GM12878 (cell line): ENCODE measurements at regions of chr2 and their contacts with region 1.

Region 1: GRCh38 chr2:149573760-149574159 is 13.8 kb downstream of the MMADHC start:
- DNase-seq: no peak
- ATAC-seq: no peak
- H3K4me3 ChIP-seq: no peak overlapping the region
- H3K27ac ChIP-seq: no peak overlapping the region
- H3K4me1 ChIP-seq: no peaks in the 10 kb centered on the region
- H3K27me3 ChIP-seq: no peaks in the 10 kb centered on the region
- CTCF ChIP-seq: peak in 1 of 3 experiments; percentile 2; a peak in 1 of 6 replicates
- EP300 ChIP-seq: no peak
- POLR2A ChIP-seq: no peak
- RAD21 ChIP-seq: no peak

Region 2: DNA sequence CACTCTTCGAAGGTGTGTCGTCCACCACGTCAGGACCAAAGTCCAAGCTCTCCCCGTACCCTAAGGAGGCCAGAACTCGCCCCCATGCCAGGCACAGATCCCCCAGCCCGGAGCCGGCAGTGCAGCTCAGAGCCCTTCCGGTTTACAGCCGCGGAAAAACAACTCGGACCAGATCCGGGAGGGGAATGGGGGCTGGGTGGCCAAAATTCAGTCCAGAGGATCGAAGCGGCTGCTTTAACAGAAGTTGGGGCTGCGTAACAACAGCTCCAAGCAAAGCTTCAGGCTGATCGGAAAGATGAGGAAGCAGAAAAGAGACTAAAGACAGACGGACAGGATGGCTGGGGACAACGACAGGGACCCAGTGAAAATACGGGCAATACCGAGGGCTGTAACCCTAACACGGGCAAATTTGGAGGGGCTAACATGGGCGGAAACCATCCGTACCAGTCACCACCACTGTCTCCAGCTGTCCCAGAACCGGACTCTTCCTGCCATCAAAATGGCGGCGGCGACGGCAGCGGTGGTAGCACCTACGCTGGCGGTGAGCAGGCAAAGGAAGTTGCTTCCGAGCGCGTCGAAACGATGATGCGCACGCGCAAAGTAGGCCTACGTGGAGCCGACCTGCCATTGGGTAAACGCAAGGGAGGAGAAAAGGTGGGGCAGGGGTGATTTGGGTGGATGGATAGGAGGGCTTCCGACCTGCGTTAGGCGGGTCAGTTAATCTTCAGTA is 13.6 kb after region 1 on chr2 and contains the start of gene MMADHC:
- CTCF ChIA-PET with region 1: interaction called, 6 read pairs
- POLR2A ChIA-PET with region 1: interaction called, 7 read pairs
- RAD21 ChIA-PET with region 1: interaction called, 8 read pairs
- SMC1A ChIA-PET with region 1: interaction called, 11 read pairs
- in situ Hi-C with region 1: no loop called
- intact Hi-C with region 1: no loop called
- DNase-seq: peak; percentile 88
- ATAC-seq: peak; percentile 95
- H3K4me3 ChIP-seq: peak within 1 kb of the TSS; percentile 97
- H3K27ac ChIP-seq: peak within 1 kb of the TSS; percentile 94
- H3K4me1 ChIP-seq: no peaks in the 10 kb centered on the region
- H3K27me3 ChIP-seq: no peaks in the 10 kb centered on the region
- CTCF ChIP-seq: no peak
- EP300 ChIP-seq: no peak
- POLR2A ChIP-seq: peak; percentile 100
- RAD21 ChIP-seq: no peak
- polyA plus RNA-seq, gene MMADHC: 292 to 415 TPM

Region 3: GRCh38 chr2:149597668-149598326 is 24.0 kb after region 1 on chr2:
- CTCF ChIA-PET with region 1: no interaction called
- POLR2A ChIA-PET with region 1: no interaction called
- RAD21 ChIA-PET with region 1: no interaction called
- SMC1A ChIA-PET with region 1: no interaction called
- in situ Hi-C with region 1: no loop called
- intact Hi-C with region 1: no loop called
- DNase-seq: peak; percentile 57
- ATAC-seq: peak; percentile 96
- H3K4me3 ChIP-seq: no peak overlapping the region
- H3K27ac ChIP-seq: no peak overlapping the region
- H3K4me1 ChIP-seq: 0 out of 2 replicates have a peak, but pooled peaks cover 4% of the 10 kb centered on the region
- H3K27me3 ChIP-seq: no peaks in the 10 kb centered on the region
- CTCF ChIP-seq: peak; percentile 79 to 85 (median 85)
- EP300 ChIP-seq: no peak
- POLR2A ChIP-seq: no peak
- RAD21 ChIP-seq: peak; percentile 94